Calu3 (cell line): ENCODE measurements at regions of chr2 and their contacts with region 1.

Region 1: GRCh38 chr2:225889446-225889850 is 489.9 kb downstream of the NYAP2 start:
- DNase-seq: peak; percentile 33
- H3K4me3 Mint-ChIP-seq: no peak overlapping the region
- H3K27ac Mint-ChIP-seq: no peak overlapping the region
- H3K4me1 Mint-ChIP-seq: peaks cover 5% of the 10 kb centered on the region
- H3K27me3 Mint-ChIP-seq: no peaks in the 10 kb centered on the region
- CTCF ChIP-seq: peak; percentile 78

Region 2: GRCh38 chr2:224946895-224947294 is 942.6 kb before region 1 on chr2:
- CTCF ChIA-PET with region 1: no interaction called
- intact Hi-C with region 1: no loop called
- DNase-seq: no peak
- H3K4me3 Mint-ChIP-seq: no peak overlapping the region
- H3K27ac Mint-ChIP-seq: no peak overlapping the region
- H3K4me1 Mint-ChIP-seq: peaks cover 11% of the 10 kb centered on the region
- H3K27me3 Mint-ChIP-seq: no peaks in the 10 kb centered on the region
- CTCF ChIP-seq: no peak

Region 3: DNA sequence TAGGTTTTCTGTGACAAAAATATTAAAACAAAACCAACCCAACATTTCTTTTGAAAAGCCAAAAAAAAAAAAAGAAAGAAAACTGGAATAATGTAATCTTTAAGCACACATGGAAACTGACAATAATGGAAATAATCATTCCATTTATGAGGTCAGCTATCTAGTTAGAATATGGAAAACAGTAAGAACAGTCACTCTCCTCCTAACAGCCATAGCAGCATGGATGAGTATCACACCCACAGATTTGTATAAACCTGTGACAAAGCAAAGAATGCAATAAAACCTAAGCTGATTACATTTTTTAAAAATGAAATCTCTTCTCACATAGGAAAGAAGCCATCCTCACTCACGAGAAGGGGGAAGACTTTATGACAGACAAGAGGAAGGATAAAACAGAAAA is 52.1 kb before region 1 on chr2:
- CTCF ChIA-PET with region 1: no interaction called
- intact Hi-C with region 1: no loop called
- DNase-seq: no peak
- H3K4me3 Mint-ChIP-seq: no peak overlapping the region
- H3K27ac Mint-ChIP-seq: no peak overlapping the region
- H3K4me1 Mint-ChIP-seq: peaks cover 11% of the 10 kb centered on the region
- H3K27me3 Mint-ChIP-seq: no peaks in the 10 kb centered on the region
- CTCF ChIP-seq: no peak

Region 4: DNA sequence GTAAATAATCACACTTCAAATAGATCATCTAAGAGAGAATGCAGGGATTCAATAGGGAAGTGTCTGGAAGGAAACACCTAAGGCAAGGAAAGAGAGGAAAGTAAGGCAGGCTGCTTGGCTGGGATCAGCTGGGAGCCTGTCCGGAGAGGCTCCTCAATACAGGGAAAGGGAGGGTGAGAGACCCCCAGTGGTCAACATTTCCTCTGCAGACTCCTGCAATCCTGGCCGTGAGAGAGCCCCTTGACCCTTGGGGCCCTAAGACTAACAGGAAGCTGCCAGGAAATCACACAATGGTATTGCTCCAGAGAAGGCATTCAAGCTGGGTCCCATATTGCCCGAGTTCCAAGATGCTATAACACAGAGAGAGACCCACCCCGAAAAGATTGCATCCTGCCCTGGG is 59.5 kb after region 1 on chr2:
- CTCF ChIA-PET with region 1: no interaction called
- intact Hi-C with region 1: no loop called
- DNase-seq: no peak
- H3K4me3 Mint-ChIP-seq: no peak overlapping the region
- H3K27ac Mint-ChIP-seq: no peak overlapping the region
- H3K4me1 Mint-ChIP-seq: no peaks in the 10 kb centered on the region
- H3K27me3 Mint-ChIP-seq: no peaks in the 10 kb centered on the region
- CTCF ChIP-seq: no peak

Region 5: DNA sequence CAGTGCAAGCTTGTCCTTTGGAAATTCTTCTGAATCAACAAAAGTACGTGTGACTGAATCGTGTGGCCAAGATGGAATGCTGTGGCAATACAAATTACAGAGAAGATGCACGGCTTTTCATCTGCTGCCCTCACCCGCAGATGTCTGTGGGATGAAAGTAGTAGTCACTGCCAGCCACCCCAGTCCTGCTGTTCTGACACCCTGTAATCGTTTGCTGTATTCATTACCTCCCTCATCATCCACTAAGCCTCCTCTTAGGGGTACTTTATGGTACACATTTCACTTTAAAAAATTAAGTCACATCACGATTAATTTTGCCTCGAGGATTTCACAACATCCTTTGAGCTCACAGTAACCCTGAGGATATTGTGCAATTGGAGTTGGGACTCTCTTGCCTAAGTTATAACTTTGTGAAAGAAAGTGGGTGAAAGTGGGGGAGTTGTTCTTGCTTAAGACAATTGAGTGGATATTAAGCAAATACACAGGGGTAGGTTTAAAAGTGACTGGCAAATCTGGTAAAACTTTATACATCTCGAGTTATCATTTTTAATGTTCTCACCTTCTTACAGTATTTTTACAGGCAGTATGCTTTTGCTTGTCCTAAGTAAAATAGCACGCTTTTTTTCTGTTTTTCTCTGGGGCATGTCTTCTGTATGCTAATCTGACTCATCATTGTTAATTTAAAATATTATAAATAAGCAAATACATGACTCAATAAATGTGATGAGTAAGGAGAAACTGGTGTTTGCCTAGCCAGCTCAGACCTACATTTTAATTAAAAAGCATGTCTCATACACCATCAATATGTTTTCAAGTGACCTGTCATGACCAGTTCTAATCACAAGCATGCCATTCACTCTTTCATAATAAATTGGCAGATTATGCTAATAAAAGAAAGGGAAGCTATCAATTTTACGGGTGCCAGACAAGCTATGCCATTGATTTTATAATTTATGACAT is 229.3 kb after region 1 on chr2:
- CTCF ChIA-PET with region 1: interaction called, 3 read pairs
- intact Hi-C with region 1: loop called (anchors 5 kb)
- DNase-seq: peak; percentile 10
- H3K4me3 Mint-ChIP-seq: peak overlapping the region; percentile 25
- H3K27ac Mint-ChIP-seq: peak overlapping the region; percentile 67
- H3K4me1 Mint-ChIP-seq: peaks cover 43% of the 10 kb centered on the region
- H3K27me3 Mint-ChIP-seq: no peaks in the 10 kb centered on the region
- CTCF ChIP-seq: no peak